ENCODE measurements at regions of chr7 and their contacts with region 1.

Region 1: GRCh38 chr7:51162724-51163329 is 153.8 kb downstream of the COBL start:
- DNase-seq: peak; percentile 18 to 66 (median 54)
- ATAC-seq: peak; percentile 77
- H3K4me3 ChIP-seq: no peak overlapping the region
- H3K4me3 Mint-ChIP-seq: peak overlapping the region in 2 of 10 donors; percentile 7 to 44
- H3K27ac ChIP-seq: no peak overlapping the region
- H3K27ac Mint-ChIP-seq: no peak overlapping the region
- H3K4me1 ChIP-seq: no peaks in the 10 kb centered on the region
- H3K4me1 Mint-ChIP-seq: peaks cover 0 to 5% (median 5%) of the 10 kb centered on the region in 7 donors
- H3K27me3 ChIP-seq: no peaks in the 10 kb centered on the region
- H3K27me3 Mint-ChIP-seq: peaks cover 21 to 39% (median 32%) of the 10 kb centered on the region in 5 donors

Region 2: GRCh38 chr7:50610521-50611277 is 552.1 kb before region 1 on chr7:
- CTCF ChIA-PET with region 1: interaction called, 7 read pairs
- POLR2A ChIA-PET with region 1: no interaction called
- intact Hi-C with region 1: loop called (anchors 2 to 10 kb)
- DNase-seq: peak in 7 of 9 donors; percentile 12 to 54 (median 39)
- ATAC-seq: peak; percentile 83
- H3K4me3 ChIP-seq: no peak overlapping the region
- H3K4me3 Mint-ChIP-seq: peak overlapping the region in 7 of 10 donors; percentile 5 to 72 (median 31)
- H3K27ac ChIP-seq: no peak overlapping the region
- H3K27ac Mint-ChIP-seq: peak overlapping the region; percentile 7 to 88 (median 38)
- H3K4me1 ChIP-seq: peaks cover 14 to 41% of the 10 kb centered on the region in 2 donors
- H3K4me1 Mint-ChIP-seq: peaks cover 31 to 51% (median 36%) of the 10 kb centered on the region in 7 donors
- H3K27me3 ChIP-seq: no peaks in the 10 kb centered on the region
- H3K27me3 Mint-ChIP-seq: peaks cover 0 to 36% (median 0%) of the 10 kb centered on the region in 5 donors

Region 3: GRCh38 chr7:50696810-50697582 is 465.8 kb before region 1 on chr7:
- CTCF ChIA-PET with region 1: interaction called, 4 read pairs
- POLR2A ChIA-PET with region 1: no interaction called
- intact Hi-C with region 1: loop called (anchors 1 to 5 kb)
- DNase-seq: peak in 5 of 9 donors; percentile 27 to 43 (median 38)
- ATAC-seq: peak; percentile 63
- H3K4me3 ChIP-seq: no peak overlapping the region
- H3K4me3 Mint-ChIP-seq: peak overlapping the region in 1 of 10 donors; percentile 3
- H3K27ac ChIP-seq: no peak overlapping the region
- H3K27ac Mint-ChIP-seq: peak overlapping the region in 2 of 9 donors; percentile 16 to 19
- H3K4me1 ChIP-seq: no peaks in the 10 kb centered on the region
- H3K4me1 Mint-ChIP-seq: peaks cover 0 to 9% (median 5%) of the 10 kb centered on the region in 7 donors
- H3K27me3 ChIP-seq: no peaks in the 10 kb centered on the region
- H3K27me3 Mint-ChIP-seq: peaks cover 0 to 3% (median 0%) of the 10 kb centered on the region in 5 donors

Region 4: DNA sequence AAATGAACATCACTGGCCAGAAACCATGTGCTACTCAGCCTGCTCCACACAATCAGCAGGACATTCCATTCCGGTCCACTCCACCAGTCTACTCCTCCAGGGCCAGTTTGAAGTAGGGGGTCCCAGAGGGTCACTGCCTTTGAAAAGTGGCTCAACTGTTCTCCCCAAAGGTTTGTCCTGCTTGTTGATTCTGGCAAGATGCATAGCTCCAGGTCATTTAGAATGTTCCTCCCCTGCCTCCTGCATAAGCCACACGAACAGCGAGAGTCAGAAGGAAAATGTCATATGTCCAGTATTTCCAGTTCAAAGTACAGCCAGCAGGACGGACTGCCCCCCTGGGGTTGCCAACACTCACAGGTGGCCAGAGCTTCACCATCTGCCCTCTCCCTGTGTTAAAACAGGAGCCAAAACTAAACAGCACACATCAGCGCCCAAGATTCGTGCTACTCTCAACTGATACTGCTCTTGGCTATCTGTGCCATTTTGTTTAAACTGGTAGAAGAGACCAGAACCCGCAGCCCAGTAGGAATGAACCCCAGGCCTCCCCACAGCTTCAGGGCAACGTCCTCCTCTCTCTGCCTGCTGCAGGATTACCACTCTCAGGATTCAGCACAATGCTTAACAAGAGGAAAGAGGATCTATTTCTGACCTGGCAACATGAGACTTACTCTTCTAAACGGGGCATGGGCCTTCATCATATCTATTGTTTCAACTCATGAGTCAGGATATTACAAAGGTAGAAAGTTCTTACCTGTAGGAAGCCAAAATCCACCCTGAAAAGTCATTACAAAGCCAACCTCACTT is 391.4 kb before region 1 on chr7:
- CTCF ChIA-PET with region 1: no interaction called
- POLR2A ChIA-PET with region 1: no interaction called
- intact Hi-C with region 1: no loop called
- DNase-seq: no peak
- ATAC-seq: no peak
- H3K4me3 ChIP-seq: no peak overlapping the region
- H3K4me3 Mint-ChIP-seq: no peak overlapping the region
- H3K27ac ChIP-seq: no peak overlapping the region
- H3K27ac Mint-ChIP-seq: peak overlapping the region in 1 of 9 donors; percentile 60
- H3K4me1 ChIP-seq: no peaks in the 10 kb centered on the region
- H3K4me1 Mint-ChIP-seq: peaks cover 0 to 12% (median 0%) of the 10 kb centered on the region in 7 donors
- H3K27me3 ChIP-seq: no peaks in the 10 kb centered on the region
- H3K27me3 Mint-ChIP-seq: peaks cover 0 to 4% (median 0%) of the 10 kb centered on the region in 5 donors

Region 5: DNA sequence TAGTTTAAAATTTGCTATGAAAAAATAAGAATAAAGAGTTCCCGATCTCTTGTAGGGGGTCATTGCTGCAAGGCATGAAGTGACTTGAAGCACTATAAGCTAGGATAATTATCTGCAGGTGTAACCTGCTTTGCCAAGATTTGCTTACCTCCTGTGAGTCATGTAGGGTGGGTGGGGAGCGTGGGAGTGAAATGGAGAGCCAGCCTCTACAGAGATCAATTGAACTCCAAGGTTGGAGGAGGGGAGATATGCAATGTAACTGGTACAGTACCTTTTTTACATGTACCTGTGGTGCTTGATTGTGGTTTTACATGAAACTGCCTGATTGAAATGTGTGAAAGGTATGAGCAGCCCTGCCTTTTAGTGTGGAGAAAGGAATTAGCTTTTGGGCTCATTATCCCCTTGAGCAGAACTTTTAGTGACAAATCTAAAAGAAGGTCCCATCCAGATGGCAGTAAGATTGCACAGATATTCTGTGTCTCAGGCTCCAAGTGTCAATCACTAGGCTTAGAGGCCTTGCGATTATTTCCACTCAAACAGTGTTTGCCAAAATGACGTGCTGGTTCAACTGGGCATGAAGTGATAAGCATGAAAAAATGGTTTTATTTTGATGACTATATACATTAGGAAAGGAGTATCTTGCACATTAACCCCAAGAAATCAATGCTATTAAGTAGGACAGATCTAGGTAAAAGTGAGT is 241.6 kb before region 1 on chr7:
- CTCF ChIA-PET with region 1: no interaction called
- POLR2A ChIA-PET with region 1: no interaction called
- intact Hi-C with region 1: no loop called
- DNase-seq: no peak
- ATAC-seq: no peak
- H3K4me3 ChIP-seq: no peak overlapping the region
- H3K4me3 Mint-ChIP-seq: no peak overlapping the region
- H3K27ac ChIP-seq: no peak overlapping the region
- H3K27ac Mint-ChIP-seq: no peak overlapping the region
- H3K4me1 ChIP-seq: no peaks in the 10 kb centered on the region
- H3K4me1 Mint-ChIP-seq: peaks cover 0 to 16% (median 9%) of the 10 kb centered on the region in 7 donors
- H3K27me3 ChIP-seq: no peaks in the 10 kb centered on the region
- H3K27me3 Mint-ChIP-seq: peaks cover 0 to 10% (median 3%) of the 10 kb centered on the region in 5 donors

Region 6: DNA sequence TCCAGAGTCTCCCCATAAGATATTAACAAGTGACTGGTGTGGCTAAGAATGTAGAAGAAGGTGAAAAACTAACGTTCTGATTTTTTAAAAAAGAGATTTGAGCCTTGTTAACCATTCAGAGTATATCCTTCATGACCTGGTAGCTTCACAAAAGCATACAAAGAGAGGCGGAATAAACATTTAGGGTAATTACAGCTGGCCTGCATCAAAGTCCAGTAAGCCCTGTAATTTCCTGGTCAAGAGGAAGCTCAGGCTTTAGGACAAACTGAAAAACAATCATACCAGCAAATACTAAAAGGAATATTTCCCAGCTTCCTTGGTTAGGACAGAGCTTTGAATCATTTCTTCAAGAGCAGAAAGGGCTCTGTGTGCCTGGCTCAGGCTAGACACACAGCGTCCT is 11.4 kb before region 1 on chr7:
- CTCF ChIA-PET with region 1: interaction called, 44 read pairs
- POLR2A ChIA-PET with region 1: no interaction called
- intact Hi-C with region 1: no loop called
- DNase-seq: no peak
- ATAC-seq: no peak
- H3K4me3 ChIP-seq: no peak overlapping the region
- H3K4me3 Mint-ChIP-seq: no peak overlapping the region
- H3K27ac ChIP-seq: no peak overlapping the region
- H3K27ac Mint-ChIP-seq: no peak overlapping the region
- H3K4me1 ChIP-seq: no peaks in the 10 kb centered on the region
- H3K4me1 Mint-ChIP-seq: no peaks in the 10 kb centered on the region
- H3K27me3 ChIP-seq: no peaks in the 10 kb centered on the region
- H3K27me3 Mint-ChIP-seq: peaks cover 7 to 37% (median 17%) of the 10 kb centered on the region in 5 donors